Activated B cell treated with CpG ODN at 0.5 μM for 24 hours (primary cell): ENCODE measurements at regions of chr18 and their contacts with region 1.

Region 1: GRCh38 chr18:60413944-60414547 is 41.5 kb upstream of the MC4R start:
- DNase-seq: no peak
- ATAC-seq: no peak
- H3K4me3 Mint-ChIP-seq: no peak overlapping the region
- H3K27ac Mint-ChIP-seq: no peak overlapping the region
- H3K4me1 Mint-ChIP-seq: no peaks in the 10 kb centered on the region
- H3K27me3 Mint-ChIP-seq: no peaks in the 10 kb centered on the region
- CTCF ChIP-seq: no peak

Region 2: DNA sequence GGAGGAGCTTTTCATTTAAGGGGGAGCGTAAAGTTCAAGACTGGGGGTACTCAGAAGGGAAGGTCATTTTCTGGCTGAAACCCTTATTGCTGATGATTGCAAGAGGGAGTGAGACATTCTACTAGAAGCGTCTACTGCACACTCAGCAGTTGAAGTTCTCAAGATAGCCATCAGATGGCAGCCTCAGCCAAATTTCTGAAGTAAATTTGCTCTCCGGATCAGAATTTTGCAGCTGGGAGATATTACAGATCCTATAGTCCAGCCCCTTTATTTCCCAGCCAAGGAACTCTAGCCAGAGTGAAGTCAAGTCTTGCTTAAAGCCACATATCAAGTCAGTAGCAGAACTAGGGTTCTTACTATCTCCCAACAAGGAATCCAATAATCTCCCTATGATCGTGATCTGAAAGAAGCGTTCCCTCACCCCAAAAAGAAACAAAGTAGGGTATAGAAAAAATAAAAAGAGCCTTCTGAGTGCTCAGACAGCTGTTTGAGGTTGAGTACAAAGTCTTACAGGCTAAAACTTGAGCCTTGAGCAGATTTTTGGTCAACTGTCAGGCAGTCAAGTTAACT is 1164.8 kb before region 1 on chr18:
- CTCF ChIA-PET with region 1: no interaction called
- POLR2A ChIA-PET with region 1: no interaction called
- intact Hi-C with region 1: loop called (anchors 10 kb)
- DNase-seq: no peak
- ATAC-seq: peak; percentile 49
- H3K4me3 Mint-ChIP-seq: no peak overlapping the region
- H3K27ac Mint-ChIP-seq: no peak overlapping the region
- H3K4me1 Mint-ChIP-seq: no peaks in the 10 kb centered on the region
- H3K27me3 Mint-ChIP-seq: peaks cover 37% of the 10 kb centered on the region
- CTCF ChIP-seq: no peak

Region 3: DNA sequence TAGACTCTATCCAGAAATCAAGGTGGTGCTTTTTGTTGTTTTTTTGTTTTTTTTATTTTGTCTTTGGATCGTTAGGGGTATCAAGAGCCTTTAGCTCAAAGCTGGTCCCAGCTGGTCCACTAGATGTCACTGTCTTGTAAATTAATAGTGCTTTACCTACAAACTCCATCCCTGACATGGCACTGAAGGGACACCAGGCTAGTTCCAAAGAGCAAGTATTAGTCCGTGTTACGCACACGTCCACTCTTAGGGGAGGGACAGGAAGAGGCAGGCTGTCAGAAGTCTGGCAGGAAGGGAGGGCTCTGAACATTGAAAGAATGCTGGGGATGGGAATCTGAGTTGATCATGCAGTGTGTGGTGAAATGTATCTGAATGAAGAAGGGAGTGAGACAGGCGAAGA is 630.9 kb before region 1 on chr18:
- CTCF ChIA-PET with region 1: interaction called, 5 read pairs
- POLR2A ChIA-PET with region 1: no interaction called
- intact Hi-C with region 1: loop called (anchors 2 kb)
- DNase-seq: no peak
- ATAC-seq: no peak
- H3K4me3 Mint-ChIP-seq: no peak overlapping the region
- H3K27ac Mint-ChIP-seq: no peak overlapping the region
- H3K4me1 Mint-ChIP-seq: no peaks in the 10 kb centered on the region
- H3K27me3 Mint-ChIP-seq: peaks cover 5% of the 10 kb centered on the region
- CTCF ChIP-seq: no peak

Region 4: DNA sequence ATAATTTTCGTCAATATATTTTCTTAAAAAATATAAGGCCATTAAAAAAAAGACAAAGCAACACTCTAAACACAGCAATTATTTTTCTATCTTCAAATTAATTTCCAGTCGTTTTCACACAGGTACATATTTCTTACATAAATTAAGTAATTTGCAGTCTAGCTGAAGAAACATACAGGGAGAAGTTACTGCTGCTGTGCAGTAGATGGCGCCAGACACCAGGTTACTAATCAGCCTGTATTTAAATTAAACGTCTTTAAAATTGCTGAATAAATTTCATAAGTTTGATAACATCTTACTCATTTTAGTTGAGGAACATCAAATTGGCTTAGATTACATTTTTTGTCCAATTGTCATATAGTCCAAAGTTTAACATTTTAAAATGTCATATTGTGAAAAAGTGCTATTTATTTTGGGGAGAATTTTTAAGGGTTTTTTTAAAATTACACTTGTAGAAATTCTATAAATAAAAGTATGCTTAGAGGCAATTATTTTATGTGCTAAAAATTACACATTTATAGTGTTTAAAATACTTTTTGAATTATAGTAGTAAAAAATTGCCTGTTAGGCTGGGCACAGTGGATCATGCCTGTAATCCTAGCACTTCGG is 425.8 kb before region 1 on chr18:
- CTCF ChIA-PET with region 1: interaction called, 4 read pairs
- POLR2A ChIA-PET with region 1: no interaction called
- intact Hi-C with region 1: loop called (anchors 2 kb)
- DNase-seq: no peak
- ATAC-seq: peak; percentile 64
- H3K4me3 Mint-ChIP-seq: no peak overlapping the region
- H3K27ac Mint-ChIP-seq: no peak overlapping the region
- H3K4me1 Mint-ChIP-seq: no peaks in the 10 kb centered on the region
- H3K27me3 Mint-ChIP-seq: peaks cover 17% of the 10 kb centered on the region
- CTCF ChIP-seq: peak; percentile 100

Region 5: GRCh38 chr18:60090170-60090569 is 323.9 kb before region 1 on chr18:
- CTCF ChIA-PET with region 1: no interaction called
- POLR2A ChIA-PET with region 1: no interaction called
- intact Hi-C with region 1: loop called (anchors 10 kb)
- DNase-seq: no peak
- ATAC-seq: no peak
- H3K4me3 Mint-ChIP-seq: no peak overlapping the region
- H3K27ac Mint-ChIP-seq: no peak overlapping the region
- H3K4me1 Mint-ChIP-seq: no peaks in the 10 kb centered on the region
- H3K27me3 Mint-ChIP-seq: peaks cover 9% of the 10 kb centered on the region
- CTCF ChIP-seq: no peak

Region 6: DNA sequence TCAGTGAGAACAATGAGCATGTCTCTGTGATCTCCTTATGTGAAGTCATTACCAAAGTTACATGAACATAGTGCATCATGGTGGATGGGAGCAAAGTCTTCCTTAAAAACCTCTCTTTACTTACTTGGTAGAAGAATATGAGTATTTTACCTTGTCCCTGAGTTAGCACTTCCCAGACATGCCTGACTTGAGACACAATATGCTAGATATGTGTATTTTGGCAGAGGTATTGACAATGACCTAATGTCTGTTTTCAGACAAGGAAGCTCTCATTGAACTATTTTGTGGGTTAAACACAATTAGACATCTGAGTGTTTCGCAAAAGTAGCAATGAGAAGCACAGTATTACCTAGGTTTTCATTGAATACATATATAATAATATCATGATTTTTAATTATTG is 57.6 kb after region 1 on chr18:
- CTCF ChIA-PET with region 1: no interaction called
- POLR2A ChIA-PET with region 1: no interaction called
- intact Hi-C with region 1: no loop called
- DNase-seq: no peak
- ATAC-seq: no peak
- H3K4me3 Mint-ChIP-seq: no peak overlapping the region
- H3K27ac Mint-ChIP-seq: no peak overlapping the region
- H3K4me1 Mint-ChIP-seq: no peaks in the 10 kb centered on the region
- H3K27me3 Mint-ChIP-seq: no peaks in the 10 kb centered on the region
- CTCF ChIP-seq: no peak